ENCODE measurements at regions of chr1 and their contacts with region 1.

Region 1: DNA sequence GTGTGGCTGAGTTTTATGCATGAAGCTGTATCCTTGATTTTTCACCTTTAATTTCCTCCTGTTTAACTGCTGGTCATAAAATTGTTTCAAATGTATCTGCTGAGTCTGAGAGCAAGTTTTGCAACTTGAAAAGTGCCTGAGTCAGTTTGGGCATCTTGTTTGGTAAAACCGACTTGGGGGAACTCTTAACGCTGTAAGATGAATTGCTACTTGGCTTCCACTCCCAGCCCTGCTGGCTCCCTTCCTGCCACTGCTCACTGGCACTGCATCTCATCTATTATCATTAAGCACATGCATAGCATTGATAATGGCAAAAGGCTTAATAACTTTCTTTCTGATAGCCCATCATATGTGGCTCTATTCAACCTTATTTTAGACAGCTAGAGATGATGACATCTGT is 35.7 kb upstream of the FAM78B start:
- DNase-seq: no peak

Region 2: DNA sequence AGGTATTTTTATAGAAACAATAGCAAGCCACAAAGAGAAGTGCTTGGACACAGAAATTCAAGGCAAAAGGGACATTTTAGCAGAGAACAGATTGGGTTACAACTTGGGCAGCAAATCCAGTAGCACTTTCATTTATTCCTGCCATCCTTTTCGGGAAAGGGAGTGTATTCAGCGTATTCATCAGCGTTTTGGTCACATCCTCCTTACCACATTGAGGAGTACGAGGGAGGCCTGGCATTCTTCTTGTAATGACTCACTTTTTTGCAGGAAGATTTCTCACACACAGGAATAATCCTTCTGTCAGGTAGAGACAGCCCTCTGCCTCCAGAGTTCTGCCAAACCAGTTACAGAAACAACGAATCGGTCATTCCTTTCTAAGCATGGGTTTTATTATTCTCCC is 17.6 kb before region 1 on chr1:
- intact Hi-C with region 1: loop called in 1 of 2 experiments (anchors 1 kb)
- DNase-seq: no peak

Region 3: DNA sequence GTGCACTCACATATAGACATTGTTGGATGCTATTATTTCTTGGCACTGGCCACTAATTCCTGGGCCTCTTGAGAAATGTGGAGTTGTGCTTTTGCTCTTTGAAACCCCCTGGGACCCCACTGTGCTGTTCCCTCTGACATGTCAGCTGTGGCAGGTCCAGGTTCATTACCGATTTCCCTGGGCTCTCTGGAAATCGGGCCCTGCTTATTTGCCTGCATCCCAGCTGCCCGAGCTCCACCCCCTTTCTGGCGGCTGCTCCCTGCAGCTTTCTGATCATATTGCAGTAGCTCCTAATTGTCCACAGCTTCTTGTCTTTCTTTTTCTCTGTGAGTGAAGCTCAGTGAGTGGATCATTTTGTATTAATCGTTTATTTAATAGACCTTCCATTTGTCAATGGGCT is 147.9 kb after region 1 on chr1:
- intact Hi-C with region 1: no loop called
- DNase-seq: no peak

Measured in posterior vena cava (tissue), 2 donors.